Caco-2 (cell line): ENCODE measurements at regions of chr6 and their contacts with region 1.

Region 1: GRCh38 chr6:5205877-5206850 is 54.6 kb downstream of the LYRM4 start:
- DNase-seq: peak; percentile 69 to 73
- H3K4me3 ChIP-seq: no peak overlapping the region
- H3K4me3 Mint-ChIP-seq: no peak overlapping the region
- H3K27ac Mint-ChIP-seq: peak overlapping the region; percentile 76
- H3K4me1 ChIP-seq: peaks cover 16% of the 10 kb centered on the region
- H3K4me1 Mint-ChIP-seq: peaks cover 6% of the 10 kb centered on the region
- H3K27me3 ChIP-seq: no peaks in the 10 kb centered on the region
- H3K27me3 Mint-ChIP-seq: no peaks in the 10 kb centered on the region
- CTCF ChIP-seq: no peak

Region 2: GRCh38 chr6:5190507-5190906 is 15.7 kb before region 1 on chr6:
- CTCF ChIA-PET with region 1: interaction called, 6 read pairs
- POLR2A ChIA-PET with region 1: interaction called, 3 read pairs
- intact Hi-C with region 1: loop called (anchors 1 kb)
- DNase-seq: peak; percentile 44 to 64
- H3K4me3 ChIP-seq: no peak overlapping the region
- H3K4me3 Mint-ChIP-seq: no peak overlapping the region
- H3K27ac Mint-ChIP-seq: peak overlapping the region; percentile 89
- H3K4me1 ChIP-seq: peaks cover 17% of the 10 kb centered on the region
- H3K4me1 Mint-ChIP-seq: peaks cover 9% of the 10 kb centered on the region
- H3K27me3 ChIP-seq: no peaks in the 10 kb centered on the region
- H3K27me3 Mint-ChIP-seq: no peaks in the 10 kb centered on the region
- CTCF ChIP-seq: no peak

Region 3: GRCh38 chr6:5260661-5261544 is 54.7 kb after region 1 on chr6 and contains the starts of genes FARS2 and LYRM4:
- CTCF ChIA-PET with region 1: no interaction called
- POLR2A ChIA-PET with region 1: interaction called, 5 read pairs
- intact Hi-C with region 1: loop called (anchors 5 kb)
- DNase-seq: peak; percentile 84 to 92
- H3K4me3 ChIP-seq: peak within 1 kb of the TSS; percentile 91
- H3K4me3 Mint-ChIP-seq: peak within 1 kb of the TSS; percentile 91
- H3K27ac Mint-ChIP-seq: peak within 1 kb of the TSS; percentile 100
- H3K4me1 ChIP-seq: peaks cover 6% of the 10 kb centered on the region; the same call in 1 of the 2 replicates
- H3K4me1 Mint-ChIP-seq: peaks cover 8% of the 10 kb centered on the region
- H3K27me3 ChIP-seq: no peaks in the 10 kb centered on the region
- H3K27me3 Mint-ChIP-seq: no peaks in the 10 kb centered on the region
- CTCF ChIP-seq: no peak
- total RNA-seq, gene FARS2: 14.0 and 15.4 TPM in 2 replicates
- total RNA-seq, gene LYRM4: 52.8 and 56.3 TPM in 2 replicates